GM12878 (cell line): ENCODE measurements at regions of chr20 and their contacts with region 1.

Region 1: GRCh38 chr20:61263084-61263695 is 11.1 kb downstream of the CDH4 start:
- DNase-seq: no peak
- ATAC-seq: no peak
- H3K4me3 ChIP-seq: no peak overlapping the region
- H3K27ac ChIP-seq: no peak overlapping the region
- H3K4me1 ChIP-seq: no peaks in the 10 kb centered on the region
- H3K27me3 ChIP-seq: no peaks in the 10 kb centered on the region
- CTCF ChIP-seq: peak; percentile 34 to 64 (median 36); a peak in 5 of 6 replicates
- EP300 ChIP-seq: no peak
- POLR2A ChIP-seq: no peak
- RAD21 ChIP-seq: 0 out of 2 replicates have a peak, but pooled peaks have one; percentile 24

Region 2: GRCh38 chr20:61311656-61312370 is 48.6 kb after region 1 on chr20:
- CTCF ChIA-PET with region 1: no interaction called
- POLR2A ChIA-PET with region 1: no interaction called
- RAD21 ChIA-PET with region 1: no interaction called
- SMC1A ChIA-PET with region 1: no interaction called
- in situ Hi-C with region 1: loop called (anchors 5 kb)
- intact Hi-C with region 1: no loop called
- DNase-seq: no peak
- ATAC-seq: no peak
- H3K4me3 ChIP-seq: no peak overlapping the region
- H3K27ac ChIP-seq: no peak overlapping the region
- H3K4me1 ChIP-seq: no peaks in the 10 kb centered on the region
- H3K27me3 ChIP-seq: no peaks in the 10 kb centered on the region
- CTCF ChIP-seq: no peak
- EP300 ChIP-seq: no peak
- POLR2A ChIP-seq: no peak
- RAD21 ChIP-seq: no peak

Region 3: GRCh38 chr20:61475729-61476128 is 212.5 kb after region 1 on chr20:
- CTCF ChIA-PET with region 1: no interaction called
- POLR2A ChIA-PET with region 1: no interaction called
- RAD21 ChIA-PET with region 1: no interaction called
- SMC1A ChIA-PET with region 1: no interaction called
- in situ Hi-C with region 1: no loop called
- intact Hi-C with region 1: no loop called
- DNase-seq: no peak
- ATAC-seq: no peak
- H3K4me3 ChIP-seq: no peak overlapping the region
- H3K27ac ChIP-seq: no peak overlapping the region
- H3K4me1 ChIP-seq: no peaks in the 10 kb centered on the region
- H3K27me3 ChIP-seq: no peaks in the 10 kb centered on the region
- CTCF ChIP-seq: no peak
- EP300 ChIP-seq: no peak
- POLR2A ChIP-seq: no peak
- RAD21 ChIP-seq: no peak

Region 4: DNA sequence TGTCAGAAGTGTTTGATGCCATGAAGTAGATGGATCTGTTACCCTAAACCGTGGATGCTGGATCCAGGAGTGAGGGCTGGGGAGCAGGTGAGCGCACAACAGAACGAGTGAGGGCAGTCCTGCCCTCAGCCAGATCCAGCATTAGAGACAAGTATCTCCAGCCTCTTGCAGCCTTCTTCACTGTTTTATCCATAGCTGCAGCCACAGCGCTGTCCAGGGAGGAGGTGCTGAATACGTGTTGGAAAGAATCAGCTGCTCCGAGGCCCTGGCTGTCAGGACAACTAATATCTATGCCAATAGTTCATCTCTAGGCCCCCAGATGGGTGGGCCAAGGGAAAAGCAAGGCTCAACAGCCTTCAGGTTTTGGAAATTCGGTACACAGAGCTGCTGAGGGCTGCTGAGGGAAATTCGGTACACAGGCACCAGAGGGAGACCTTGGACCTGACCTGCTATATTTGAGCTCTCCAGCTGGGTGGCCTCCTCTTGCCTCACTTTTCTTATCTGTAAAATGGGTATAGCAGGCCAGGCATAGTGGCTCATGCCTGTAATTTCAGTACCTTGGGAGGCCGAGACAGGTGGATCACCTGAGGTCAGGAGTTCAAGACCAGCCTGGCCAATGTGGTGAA is 267.6 kb after region 1 on chr20:
- CTCF ChIA-PET with region 1: no interaction called
- POLR2A ChIA-PET with region 1: no interaction called
- RAD21 ChIA-PET with region 1: no interaction called
- SMC1A ChIA-PET with region 1: no interaction called
- in situ Hi-C with region 1: no loop called
- intact Hi-C with region 1: no loop called
- DNase-seq: no peak
- ATAC-seq: no peak
- H3K4me3 ChIP-seq: no peak overlapping the region
- H3K27ac ChIP-seq: no peak overlapping the region
- H3K4me1 ChIP-seq: no peaks in the 10 kb centered on the region
- H3K27me3 ChIP-seq: no peaks in the 10 kb centered on the region
- CTCF ChIP-seq: no peak
- EP300 ChIP-seq: no peak
- POLR2A ChIP-seq: no peak
- RAD21 ChIP-seq: no peak